Activated T-helper 1 cell treated with anti-CD3 and anti-CD28 coated beads, Interleukin-12 subunit alpha, Interleukin-12 subunit beta, Interleukin-2, Interleukin-4 antibody, amounts not matched to agents 30 ng/mL and 10 ng/mL and 1 ng/mL, durations not matched to agents 14 hours and 24 hours and 36 hours (primary cell): ENCODE measurements at regions of chr14 and their contacts with region 1.

Region 1: DNA sequence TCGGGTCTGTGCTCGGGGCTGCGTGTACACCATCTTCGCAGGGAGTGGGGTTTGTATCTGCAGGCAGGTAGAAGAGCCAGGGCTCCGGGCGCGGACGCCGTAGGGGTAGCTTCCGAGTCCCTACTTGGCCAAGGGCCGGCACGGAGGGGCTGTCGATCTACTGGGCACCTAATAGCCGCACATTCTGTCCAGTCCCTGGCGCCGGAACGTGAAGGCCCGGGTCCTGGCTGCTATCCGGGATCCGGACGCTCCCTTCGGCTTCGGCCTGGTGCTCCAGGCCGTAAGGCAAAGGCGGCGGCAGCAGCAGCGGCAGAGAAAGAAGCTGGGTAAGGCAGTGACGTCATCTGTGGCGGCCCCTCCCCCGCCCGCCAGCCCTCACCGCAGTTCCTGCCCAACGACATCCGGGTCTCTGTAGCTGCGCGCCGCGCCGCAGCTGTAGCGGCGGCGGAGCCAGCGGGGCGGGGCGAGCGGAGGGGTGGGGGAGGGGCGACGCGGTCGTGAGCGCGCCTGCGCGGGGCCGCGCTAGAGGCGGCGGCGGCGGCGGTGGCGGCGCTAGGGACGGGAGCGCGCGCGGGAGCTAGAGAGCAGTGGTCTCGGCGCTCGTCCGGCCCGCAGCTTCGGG is at the start of gene PPM1A:
- DNase-seq: peak; percentile 90
- H3K4me3 Mint-ChIP-seq: peak within 1 kb of the TSS; percentile 96
- H3K27ac Mint-ChIP-seq: peak within 1 kb of the TSS; percentile 100
- H3K4me1 Mint-ChIP-seq: peaks cover 59% of the 10 kb centered on the region
- H3K27me3 Mint-ChIP-seq: no peaks in the 10 kb centered on the region
- total RNA-seq, gene PPM1A: 43.9 and 50.7 TPM in 2 replicates

Region 2: GRCh38 chr14:58427281-58428117 is 1821.3 kb before region 1 on chr14 and contains the starts of genes KIAA0586 and TIMM9:
- intact Hi-C with region 1: loop called (anchors 2 kb)
- DNase-seq: peak; percentile 95
- H3K4me3 Mint-ChIP-seq: peak within 1 kb of the TSS; percentile 86
- H3K27ac Mint-ChIP-seq: peak within 1 kb of the TSS; percentile 96
- H3K4me1 Mint-ChIP-seq: peaks cover 49% of the 10 kb centered on the region
- H3K27me3 Mint-ChIP-seq: no peaks in the 10 kb centered on the region
- total RNA-seq, gene KIAA0586: 19.7 and 19.8 TPM in 2 replicates
- total RNA-seq, gene TIMM9: 66.5 and 67.4 TPM in 2 replicates

Region 3: DNA sequence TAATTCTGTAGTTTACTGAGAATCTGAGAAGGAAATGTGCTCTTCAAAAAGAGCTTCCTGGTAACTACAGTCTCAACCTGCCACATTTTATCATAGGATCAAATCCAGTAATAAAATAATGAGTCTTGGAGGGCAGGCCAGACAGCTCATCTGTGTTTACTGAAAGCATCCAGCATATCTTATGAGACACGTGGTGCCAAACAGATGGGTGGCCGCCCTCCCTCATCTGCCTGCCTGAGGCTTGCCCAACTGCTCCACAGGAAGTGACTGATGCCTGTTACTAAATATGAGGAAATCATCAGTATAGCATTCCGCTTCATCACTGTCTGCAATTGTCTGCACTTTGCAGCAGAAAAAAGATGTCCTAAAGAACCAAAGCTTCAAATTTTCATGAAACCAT is 97.1 kb before region 1 on chr14:
- intact Hi-C with region 1: loop called (anchors 1 kb)
- DNase-seq: peak; percentile 50
- H3K4me3 Mint-ChIP-seq: peak overlapping the region; percentile 26
- H3K27ac Mint-ChIP-seq: peak overlapping the region; percentile 87
- H3K4me1 Mint-ChIP-seq: peaks cover 42% of the 10 kb centered on the region
- H3K27me3 Mint-ChIP-seq: no peaks in the 10 kb centered on the region

Region 4: DNA sequence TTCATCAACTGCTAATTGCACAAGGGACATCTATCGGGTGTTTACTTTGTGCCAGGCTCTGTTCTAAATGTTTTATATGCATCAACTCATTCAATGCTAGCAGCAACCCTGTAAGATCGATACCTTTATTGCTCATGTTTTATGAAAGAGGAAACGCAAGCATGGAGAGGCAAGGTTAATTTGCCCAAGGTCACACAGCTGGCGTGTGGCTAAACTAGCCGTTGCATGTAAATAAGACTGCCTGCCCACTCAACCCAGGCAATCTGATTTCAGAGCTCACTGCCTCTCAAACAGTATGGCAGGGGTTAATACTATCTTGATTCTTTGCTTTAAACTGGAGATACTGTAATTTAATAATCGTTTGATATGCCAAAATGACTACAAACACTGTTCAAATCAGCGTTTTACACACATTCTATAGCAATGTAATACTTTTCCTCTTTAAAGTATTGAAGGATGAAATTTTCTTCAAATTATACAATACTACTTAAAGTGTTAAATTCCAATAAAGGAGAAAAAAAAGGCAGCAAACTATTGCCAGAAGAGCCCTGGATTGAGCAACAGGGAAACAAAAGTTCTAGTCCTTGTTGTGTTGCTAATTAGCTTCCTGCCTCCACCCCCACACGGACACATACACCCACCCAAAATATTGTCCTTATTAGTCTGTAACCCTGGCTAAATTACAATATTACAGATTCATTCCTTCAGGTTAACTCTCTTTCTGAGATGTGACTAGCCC is 44.5 kb before region 1 on chr14:
- intact Hi-C with region 1: loop called (anchors 2 kb)
- DNase-seq: no peak
- H3K4me3 Mint-ChIP-seq: no peak overlapping the region
- H3K27ac Mint-ChIP-seq: no peak overlapping the region
- H3K4me1 Mint-ChIP-seq: peaks cover 9% of the 10 kb centered on the region
- H3K27me3 Mint-ChIP-seq: peaks cover 3% of the 10 kb centered on the region

Region 5: DNA sequence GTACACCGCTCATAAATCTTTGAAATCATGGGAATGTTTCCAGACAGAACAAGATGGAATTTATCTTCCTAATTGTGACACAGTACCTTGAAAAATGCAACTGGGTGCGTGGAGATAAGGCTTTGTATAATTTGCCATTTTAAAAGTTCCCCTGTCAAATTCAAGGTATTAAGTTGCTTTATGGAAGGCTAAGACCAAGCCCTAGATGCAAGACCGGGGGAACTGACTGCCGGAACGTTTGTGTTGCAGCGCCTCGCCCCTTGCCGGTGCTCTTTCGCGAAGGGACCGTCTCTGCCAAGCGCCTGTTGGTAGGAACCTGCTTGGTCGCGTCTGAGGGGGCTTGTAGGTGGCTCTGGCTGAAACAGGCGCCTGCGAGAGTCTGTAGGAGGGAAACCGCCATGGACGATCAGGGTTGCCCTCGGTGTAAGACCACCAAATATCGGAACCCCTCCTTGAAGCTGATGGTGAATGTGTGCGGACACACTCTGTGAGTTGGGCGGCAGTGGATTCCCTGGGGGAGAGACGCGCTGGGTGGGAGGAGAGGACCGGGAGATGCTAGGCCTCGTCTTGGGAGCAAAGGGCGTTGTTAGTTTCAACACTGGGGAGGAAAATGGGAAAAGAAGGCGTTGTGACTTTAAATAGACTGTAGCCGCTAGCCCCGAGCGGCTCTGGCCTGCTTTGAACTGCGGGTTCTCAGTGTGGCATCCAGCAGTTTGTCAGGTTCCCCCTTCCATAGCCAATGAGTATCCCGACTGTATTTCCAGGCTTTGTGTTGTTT is 485.8 kb after region 1 on chr14 and contains the start of gene MNAT1:
- intact Hi-C with region 1: loop called (anchors 5 kb)
- DNase-seq: peak; percentile 69
- H3K4me3 Mint-ChIP-seq: peak within 1 kb of the TSS; percentile 97
- H3K27ac Mint-ChIP-seq: peak within 1 kb of the TSS; percentile 87
- H3K4me1 Mint-ChIP-seq: peaks cover 27% of the 10 kb centered on the region
- H3K27me3 Mint-ChIP-seq: peaks cover 21% of the 10 kb centered on the region
- total RNA-seq, gene MNAT1: 45.1 and 51.2 TPM in 2 replicates